RWPE1 (cell line): ENCODE measurements at regions of chr1 and their contacts with region 1.

Region 1: DNA sequence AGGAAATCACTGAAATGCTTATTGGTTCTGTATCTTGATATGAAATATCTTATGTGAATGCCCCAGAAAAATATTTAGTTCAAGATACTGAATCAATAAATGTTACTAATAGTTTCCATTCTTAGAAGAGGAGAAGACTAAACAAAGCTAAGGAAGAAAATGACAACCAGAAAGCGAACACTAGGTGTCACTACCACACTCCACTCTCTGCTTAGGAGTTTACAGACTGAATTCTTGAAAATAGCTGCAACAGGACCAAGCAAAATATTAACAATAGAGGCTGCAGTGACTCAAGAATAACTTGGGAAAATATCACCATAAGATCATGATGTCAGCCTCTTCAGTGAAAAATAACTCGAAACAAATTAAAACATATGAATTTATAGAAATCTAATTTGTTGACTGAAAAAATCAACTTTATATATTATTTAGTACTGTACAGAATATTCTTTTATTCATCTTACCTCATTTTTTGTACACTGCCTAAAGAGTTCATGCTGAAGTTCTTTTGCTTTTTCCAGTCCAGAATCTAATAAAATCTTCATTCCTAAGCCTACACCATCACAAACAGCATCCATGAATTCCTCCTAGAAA is 61.6 kb downstream of the KIF14 start:
- DNase-seq: peak; percentile 63
- H3K27ac ChIP-seq: no peak overlapping the region
- CTCF ChIP-seq: peak; percentile 72

Region 2: GRCh38 chr1:201023517-201023902 is 464.5 kb after region 1 on chr1 and contains the start of gene KIF21B:
- CTCF ChIA-PET with region 1: interaction called, 10 read pairs
- POLR2A ChIA-PET with region 1: no interaction called
- DNase-seq: peak; percentile 93
- H3K27ac ChIP-seq: no peak within 1 kb of the TSS
- CTCF ChIP-seq: no peak